IMR-90 (cell line): ENCODE measurements at regions of chr7 and their contacts with region 1.

Region 1: DNA sequence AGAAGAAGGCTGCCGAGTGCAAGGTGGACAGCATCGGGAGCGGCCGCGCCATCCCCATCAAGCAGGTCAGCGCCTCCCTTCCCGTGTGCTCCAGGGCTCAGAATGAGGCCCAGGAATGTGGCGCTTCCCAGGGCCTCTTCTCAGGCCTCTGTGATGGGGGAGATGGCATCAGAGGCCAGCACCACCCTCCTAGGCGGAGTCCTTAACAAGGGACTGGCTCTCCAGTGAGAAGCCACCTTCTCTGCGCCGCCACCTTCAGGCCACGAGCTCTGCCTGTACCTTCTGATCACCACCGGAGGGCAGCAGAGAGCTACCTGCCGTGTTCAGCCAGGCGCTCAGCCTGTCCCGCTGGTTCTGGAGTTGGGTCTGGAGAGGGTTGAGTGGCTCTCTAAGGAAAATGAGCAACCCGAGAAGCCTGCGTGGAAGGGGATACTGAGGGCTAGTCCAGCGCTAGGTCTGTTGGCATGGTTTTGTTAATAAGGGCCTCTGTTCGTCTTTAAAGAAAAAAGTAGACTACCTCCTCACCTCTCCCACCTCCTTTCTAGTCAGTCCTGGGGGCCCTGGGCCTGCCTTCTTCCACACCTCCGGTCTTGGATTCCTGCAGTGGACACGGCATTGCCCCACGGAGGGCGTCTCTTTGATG is 37.7 kb downstream of the AGAP3 start:
- DNase-seq: peak; percentile 75
- ATAC-seq: peak; percentile 96
- H3K4me3 ChIP-seq: no peak overlapping the region
- H3K27ac ChIP-seq: no peak overlapping the region
- H3K4me1 ChIP-seq: no peaks in the 10 kb centered on the region
- H3K27me3 ChIP-seq: no peaks in the 10 kb centered on the region
- CTCF ChIP-seq: peak; percentile 98
- POLR2A ChIP-seq: no peak
- RAD21 ChIP-seq: peak; percentile 86

Region 2: GRCh38 chr7:151095123-151095797 is 28.7 kb before region 1 on chr7:
- CTCF ChIA-PET with region 1: interaction called, 11 read pairs
- POLR2A ChIA-PET with region 1: no interaction called
- dilution Hi-C with region 1: no loop called
- in situ Hi-C with region 1: no loop called
- intact Hi-C with region 1: no loop called
- DNase-seq: no peak
- ATAC-seq: no peak
- H3K4me3 ChIP-seq: no peak overlapping the region
- H3K27ac ChIP-seq: no peak overlapping the region; the same call in 1 of the 2 replicates
- H3K4me1 ChIP-seq: peaks cover 11% of the 10 kb centered on the region
- H3K27me3 ChIP-seq: no peaks in the 10 kb centered on the region
- CTCF ChIP-seq: 0 out of 2 replicates have a peak, but pooled peaks have one; percentile 1
- POLR2A ChIP-seq: no peak
- RAD21 ChIP-seq: no peak

Region 3: DNA sequence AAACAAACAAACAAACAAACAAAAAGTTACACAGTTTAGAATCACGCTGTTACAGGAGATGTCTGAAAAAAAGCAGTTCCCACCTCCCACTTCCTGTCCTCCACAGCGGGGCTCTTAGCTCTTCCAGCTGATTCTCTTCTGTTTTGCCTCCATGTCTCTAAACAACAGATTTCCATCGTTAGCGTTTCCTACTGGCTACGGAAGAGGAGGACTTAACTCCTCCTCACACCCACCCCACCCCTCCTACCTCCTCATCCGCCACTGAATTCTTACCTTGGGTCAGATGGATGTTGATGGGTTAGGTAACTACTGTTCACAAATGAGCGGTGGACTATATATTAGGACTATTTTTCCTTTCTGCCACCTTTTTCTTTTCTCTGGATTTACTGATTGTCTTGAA is 180.9 kb after region 1 on chr7:
- CTCF ChIA-PET with region 1: no interaction called
- POLR2A ChIA-PET with region 1: no interaction called
- dilution Hi-C with region 1: no loop called
- in situ Hi-C with region 1: loop called (anchors 10 kb)
- intact Hi-C with region 1: loop called (anchors 5 kb)
- DNase-seq: no peak
- ATAC-seq: no peak
- H3K4me3 ChIP-seq: no peak overlapping the region
- H3K27ac ChIP-seq: no peak overlapping the region
- H3K4me1 ChIP-seq: peaks cover 13% of the 10 kb centered on the region; the same call in 1 of the 2 replicates
- H3K27me3 ChIP-seq: peaks cover 31% of the 10 kb centered on the region
- CTCF ChIP-seq: no peak
- POLR2A ChIP-seq: no peak
- RAD21 ChIP-seq: no peak